CD4-positive, alpha-beta T cell (primary cell): ENCODE measurements at regions of chr5 and their contacts with region 1.

Region 1: DNA sequence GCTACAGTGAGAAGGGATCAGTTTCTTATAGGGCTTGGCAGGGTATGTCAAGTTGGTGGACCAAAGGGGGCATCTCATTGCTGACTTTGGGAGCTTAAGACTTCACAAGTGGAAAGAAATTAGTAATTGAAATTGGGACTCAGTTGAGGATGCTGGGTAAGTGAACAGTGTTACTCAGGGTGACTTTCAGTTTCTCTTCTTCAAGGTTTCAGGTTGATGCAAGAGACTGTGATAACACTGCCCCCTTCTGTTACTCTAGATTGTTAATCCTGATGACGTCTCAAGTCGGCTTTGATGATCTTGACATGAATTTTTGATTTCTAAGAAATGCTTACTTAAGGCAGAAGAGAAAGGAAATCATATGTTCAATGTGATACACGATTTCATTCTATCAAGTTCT is 21.3 kb downstream of the KCTD16 start:
- DNase-seq: peak in 5 of 14 experiments; percentile 19 to 92 (median 91)
- ATAC-seq: peak; percentile 39
- H3K4me3 ChIP-seq: peak overlapping the region; percentile 11
- H3K4me3 Mint-ChIP-seq: no peak overlapping the region
- H3K27ac ChIP-seq: peak overlapping the region; percentile 84 to 90
- H3K27ac Mint-ChIP-seq: no peak overlapping the region
- H3K4me1 ChIP-seq: peaks cover 42% of the 10 kb centered on the region
- H3K4me1 Mint-ChIP-seq: peaks cover 37% of the 10 kb centered on the region
- H3K27me3 ChIP-seq: no peaks in the 10 kb centered on the region
- H3K27me3 Mint-ChIP-seq: no peaks in the 10 kb centered on the region
- CTCF ChIP-seq: peak; percentile 72

Region 2: GRCh38 chr5:142356716-142357473 is 1835.1 kb before region 1 on chr5:
- CTCF ChIA-PET with region 1: no interaction called
- POLR2A ChIA-PET with region 1: no interaction called
- intact Hi-C with region 1: loop called in 1 of 2 experiments (anchors 5 kb)
- DNase-seq: peak; percentile 72 to 94 (median 80)
- ATAC-seq: peak; percentile 85
- H3K4me3 ChIP-seq: peak overlapping the region; percentile 65
- H3K4me3 Mint-ChIP-seq: peak overlapping the region; percentile 93
- H3K27ac ChIP-seq: peak overlapping the region in 1 of 2 donors; percentile 56
- H3K27ac Mint-ChIP-seq: peak overlapping the region; percentile 73
- H3K4me1 ChIP-seq: peaks cover 42% of the 10 kb centered on the region
- H3K4me1 Mint-ChIP-seq: peaks cover 67% of the 10 kb centered on the region
- H3K27me3 ChIP-seq: no peaks in the 10 kb centered on the region
- H3K27me3 Mint-ChIP-seq: no peaks in the 10 kb centered on the region
- CTCF ChIP-seq: no peak

Region 3: GRCh38 chr5:143002459-143003328 is 1189.3 kb before region 1 on chr5:
- CTCF ChIA-PET with region 1: interaction called, 6 read pairs
- POLR2A ChIA-PET with region 1: interaction called, 19 read pairs
- intact Hi-C with region 1: loop called (anchors 2 to 5 kb)
- DNase-seq: peak in 13 of 14 experiments; percentile 10 to 91 (median 37)
- ATAC-seq: peak; percentile 83
- H3K4me3 ChIP-seq: peak overlapping the region; percentile 3
- H3K4me3 Mint-ChIP-seq: peak overlapping the region; percentile 55
- H3K27ac ChIP-seq: peak overlapping the region; percentile 76 to 87
- H3K27ac Mint-ChIP-seq: peak overlapping the region; percentile 91
- H3K4me1 ChIP-seq: peaks cover 33% of the 10 kb centered on the region
- H3K4me1 Mint-ChIP-seq: peaks cover 48% of the 10 kb centered on the region
- H3K27me3 ChIP-seq: no peaks in the 10 kb centered on the region
- H3K27me3 Mint-ChIP-seq: no peaks in the 10 kb centered on the region
- CTCF ChIP-seq: peak; percentile 73

Region 4: DNA sequence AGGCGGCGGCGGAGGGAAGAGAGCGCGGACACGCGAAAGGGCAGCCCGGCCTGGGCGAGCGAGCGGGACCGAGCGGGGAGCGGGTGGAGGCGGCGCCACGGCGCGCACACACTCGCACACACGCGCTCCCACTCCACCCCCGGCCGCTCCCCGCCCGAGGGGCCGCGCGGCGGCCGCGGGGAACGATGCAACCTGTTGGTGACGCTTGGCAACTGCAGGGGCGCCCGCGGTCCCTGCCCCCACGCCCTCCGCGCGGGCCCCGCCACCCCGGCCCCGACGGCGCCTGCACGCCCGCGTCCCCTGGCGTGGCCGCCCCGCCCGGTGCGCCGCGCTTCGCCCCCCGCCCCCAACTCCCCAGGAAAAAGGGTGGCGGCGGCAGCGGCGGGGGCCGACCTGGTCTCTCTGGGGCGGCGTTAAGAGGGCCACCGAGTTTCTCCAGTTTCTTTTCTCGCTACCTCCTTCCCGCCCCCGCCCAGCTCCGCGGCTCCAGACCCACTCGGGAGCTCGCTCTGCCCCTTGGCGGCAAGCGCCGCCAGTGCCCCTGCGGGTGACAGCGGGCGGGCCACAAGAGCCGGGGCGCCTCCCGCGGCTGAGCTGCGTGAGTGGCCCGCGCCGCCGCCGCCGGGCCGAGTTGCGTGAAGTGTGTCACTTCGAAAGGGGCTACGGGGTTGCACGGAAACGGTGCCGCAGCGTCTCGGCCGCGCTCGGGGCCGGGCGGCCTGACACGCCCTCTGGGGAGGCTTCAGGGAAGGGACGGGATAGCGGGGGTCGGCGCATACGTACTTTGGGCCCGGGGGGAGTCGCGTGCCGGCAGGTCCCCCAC is 788.2 kb before region 1 on chr5 and contains the start of gene NR3C1:
- CTCF ChIA-PET with region 1: interaction called, 10 read pairs
- POLR2A ChIA-PET with region 1: interaction called, 30 read pairs
- intact Hi-C with region 1: loop called (anchors 2 to 5 kb)
- DNase-seq: peak; percentile 79 to 96 (median 87)
- ATAC-seq: peak; percentile 68
- H3K4me3 ChIP-seq: peak within 1 kb of the TSS; percentile 77
- H3K4me3 Mint-ChIP-seq: peak within 1 kb of the TSS; percentile 96
- H3K27ac ChIP-seq: peak within 1 kb of the TSS; percentile 88 to 98
- H3K27ac Mint-ChIP-seq: peak within 1 kb of the TSS; percentile 98
- H3K4me1 ChIP-seq: peaks cover 38% of the 10 kb centered on the region
- H3K4me1 Mint-ChIP-seq: peaks cover 44% of the 10 kb centered on the region
- H3K27me3 ChIP-seq: no peaks in the 10 kb centered on the region
- H3K27me3 Mint-ChIP-seq: no peaks in the 10 kb centered on the region
- CTCF ChIP-seq: no peak
- total RNA-seq, gene NR3C1: 168 to 191 TPM

Region 5: GRCh38 chr5:143824851-143825720 is 366.9 kb before region 1 on chr5:
- CTCF ChIA-PET with region 1: interaction called, 7 read pairs
- POLR2A ChIA-PET with region 1: interaction called, 3 read pairs
- intact Hi-C with region 1: loop called (anchors 2 kb)
- DNase-seq: peak; percentile 75 to 91 (median 82)
- ATAC-seq: peak; percentile 94
- H3K4me3 ChIP-seq: no peak overlapping the region
- H3K4me3 Mint-ChIP-seq: no peak overlapping the region
- H3K27ac ChIP-seq: no peak overlapping the region
- H3K27ac Mint-ChIP-seq: no peak overlapping the region
- H3K4me1 ChIP-seq: peaks cover 13% of the 10 kb centered on the region
- H3K4me1 Mint-ChIP-seq: peaks cover 17% of the 10 kb centered on the region
- H3K27me3 ChIP-seq: no peaks in the 10 kb centered on the region
- H3K27me3 Mint-ChIP-seq: peaks cover 4% of the 10 kb centered on the region
- CTCF ChIP-seq: peak; percentile 86

Region 6: GRCh38 chr5:144203750-144204596 is 12.0 kb after region 1 on chr5:
- CTCF ChIA-PET with region 1: interaction called, 12 read pairs
- POLR2A ChIA-PET with region 1: no interaction called
- intact Hi-C with region 1: no loop called
- DNase-seq: peak in 8 of 14 experiments; percentile 5 to 76 (median 39)
- ATAC-seq: peak; percentile 55
- H3K4me3 ChIP-seq: no peak overlapping the region
- H3K4me3 Mint-ChIP-seq: no peak overlapping the region
- H3K27ac ChIP-seq: no peak overlapping the region
- H3K27ac Mint-ChIP-seq: no peak overlapping the region
- H3K4me1 ChIP-seq: peaks cover 6% of the 10 kb centered on the region
- H3K4me1 Mint-ChIP-seq: peaks cover 4% of the 10 kb centered on the region
- H3K27me3 ChIP-seq: peaks cover 25 to 47% of the 10 kb centered on the region in 2 experiments
- H3K27me3 Mint-ChIP-seq: peaks cover 83% of the 10 kb centered on the region
- CTCF ChIP-seq: peak; percentile 94